Naive thymus-derived CD4-positive, alpha-beta T cell (primary cell): ENCODE measurements at regions of chr19 and their contacts with region 1.

Region 1: GRCh38 chr19:6862673-6863078 is 24.7 kb upstream of the ADGRE1 start:
- DNase-seq: peak; percentile 73 to 91 (median 88)
- ATAC-seq: peak; percentile 94
- H3K4me3 ChIP-seq: peak overlapping the region; percentile 12
- H3K4me3 Mint-ChIP-seq: peak overlapping the region; percentile 81 to 92 (median 86)
- H3K27ac ChIP-seq: peak overlapping the region; percentile 23
- H3K27ac Mint-ChIP-seq: peak overlapping the region; percentile 56 to 92 (median 82)
- H3K4me1 ChIP-seq: peaks cover 0 to 3% of the 10 kb centered on the region in 2 donors
- H3K4me1 Mint-ChIP-seq: peaks cover 17 to 39% (median 28%) of the 10 kb centered on the region in 7 donors
- H3K27me3 ChIP-seq: no peaks in the 10 kb centered on the region
- H3K27me3 Mint-ChIP-seq: no peaks in the 10 kb centered on the region

Region 2: GRCh38 chr19:6218491-6219162 is 644.0 kb before region 1 on chr19:
- CTCF ChIA-PET with region 1: interaction called, 4 read pairs
- POLR2A ChIA-PET with region 1: no interaction called
- intact Hi-C with region 1: loop called in 1 of 2 experiments (anchors 2 kb)
- DNase-seq: peak; percentile 63 to 85 (median 76)
- ATAC-seq: peak; percentile 86
- H3K4me3 ChIP-seq: no peak overlapping the region
- H3K4me3 Mint-ChIP-seq: no peak overlapping the region
- H3K27ac ChIP-seq: no peak overlapping the region
- H3K27ac Mint-ChIP-seq: peak overlapping the region in 3 of 9 donors; percentile 10 to 78 (median 35)
- H3K4me1 ChIP-seq: no peaks in the 10 kb centered on the region
- H3K4me1 Mint-ChIP-seq: peaks cover 0 to 4% (median 0%) of the 10 kb centered on the region in 7 donors
- H3K27me3 ChIP-seq: no peaks in the 10 kb centered on the region
- H3K27me3 Mint-ChIP-seq: no peaks in the 10 kb centered on the region

Region 3: DNA sequence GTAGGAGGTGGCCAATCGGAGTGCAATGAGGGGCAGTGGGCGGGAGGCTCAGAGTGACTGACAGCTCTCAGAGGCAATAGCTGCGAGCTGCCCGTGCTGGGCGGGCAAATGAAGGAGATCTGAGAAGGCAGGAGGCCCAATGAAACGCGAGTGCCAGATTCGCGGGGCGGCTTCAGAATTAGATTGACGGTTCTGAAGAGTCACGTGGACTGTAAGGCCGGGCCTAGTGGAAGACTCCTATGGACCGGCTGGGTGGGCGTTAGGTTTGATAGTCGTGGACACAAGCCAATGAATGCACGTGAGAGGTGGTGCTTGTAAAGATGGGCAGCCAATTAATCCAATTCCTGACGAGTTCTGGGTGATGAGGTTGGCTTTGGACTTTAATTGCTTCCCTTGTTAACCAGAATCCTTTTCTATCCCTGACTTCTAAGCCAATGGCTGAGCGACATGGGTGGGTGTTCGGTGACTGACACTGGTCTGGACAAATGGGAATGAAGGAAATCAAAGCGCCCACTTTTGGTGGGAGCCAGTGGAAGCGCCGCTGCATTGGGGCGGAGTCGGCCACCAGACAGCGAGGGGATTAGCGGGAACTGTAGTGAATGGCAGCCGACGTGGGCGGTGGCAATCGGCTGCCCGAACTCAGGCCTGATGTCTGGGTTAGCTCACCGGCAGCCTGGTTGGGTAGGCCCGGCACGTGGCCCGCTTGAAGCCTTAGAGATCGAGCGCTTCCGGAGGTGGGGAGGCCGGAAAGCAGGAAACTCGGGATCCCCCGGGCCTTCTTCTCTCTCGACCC is 437.5 kb before region 1 on chr19:
- CTCF ChIA-PET with region 1: interaction called, 4 read pairs
- POLR2A ChIA-PET with region 1: no interaction called
- intact Hi-C with region 1: loop called in 1 of 2 experiments (anchors 1 kb)
- DNase-seq: peak; percentile 66 to 100 (median 99)
- ATAC-seq: peak; percentile 89
- H3K4me3 ChIP-seq: peak overlapping the region; percentile 39
- H3K4me3 Mint-ChIP-seq: peak overlapping the region; percentile 69 to 87 (median 78)
- H3K27ac ChIP-seq: peak overlapping the region; percentile 77
- H3K27ac Mint-ChIP-seq: peak overlapping the region; percentile 78 to 97 (median 94)
- H3K4me1 ChIP-seq: peaks cover 15 to 32% of the 10 kb centered on the region in 2 donors
- H3K4me1 Mint-ChIP-seq: peaks cover 18 to 48% (median 41%) of the 10 kb centered on the region in 7 donors
- H3K27me3 ChIP-seq: no peaks in the 10 kb centered on the region
- H3K27me3 Mint-ChIP-seq: no peaks in the 10 kb centered on the region

Region 4: DNA sequence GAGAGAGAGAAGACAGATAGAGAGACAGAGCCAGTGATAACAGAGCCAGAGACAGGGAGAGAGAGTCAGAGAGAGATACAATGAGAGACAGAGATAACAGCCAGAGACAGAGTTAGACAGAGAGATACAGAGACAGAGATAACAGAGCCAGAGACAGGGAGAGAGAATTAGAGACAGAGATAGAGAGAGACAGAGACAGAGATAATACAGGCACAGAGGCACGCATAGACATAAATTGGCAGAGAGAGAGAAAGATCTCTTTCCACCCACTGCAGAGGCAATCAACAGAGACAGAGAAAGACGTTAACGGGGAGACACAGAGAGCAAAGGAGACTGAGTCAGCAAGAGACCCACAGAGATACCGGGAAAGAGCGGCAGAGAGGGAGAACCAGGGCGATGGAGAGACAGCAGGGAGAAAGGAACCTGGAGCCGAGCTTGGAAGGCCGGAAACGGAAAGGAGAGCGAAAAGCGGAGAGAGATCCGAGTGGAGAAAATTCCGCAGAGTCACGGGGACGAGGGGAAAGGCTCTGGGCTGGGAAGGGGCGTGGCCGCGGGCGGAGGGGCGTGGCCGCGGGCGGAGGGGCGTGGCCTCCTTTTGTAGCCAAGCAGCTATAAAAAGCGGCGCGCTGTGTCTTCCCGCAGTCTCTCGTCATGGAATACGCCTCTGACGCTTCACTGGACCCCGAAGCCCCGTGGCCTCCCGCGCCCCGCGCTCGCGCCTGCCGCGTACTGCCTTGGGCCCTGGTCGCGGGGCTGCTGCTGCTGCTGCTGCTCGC is 332.1 kb before region 1 on chr19 and contains the start of gene TNFSF9:
- CTCF ChIA-PET with region 1: no interaction called
- POLR2A ChIA-PET with region 1: no interaction called
- intact Hi-C with region 1: loop called in 1 of 2 experiments (anchors 5 kb)
- DNase-seq: peak; percentile 51 to 93 (median 65)
- ATAC-seq: peak; percentile 90
- H3K4me3 ChIP-seq: peak within 1 kb of the TSS; percentile 36
- H3K4me3 Mint-ChIP-seq: peak within 1 kb of the TSS; percentile 81 to 93 (median 86)
- H3K27ac ChIP-seq: peak within 1 kb of the TSS; percentile 58
- H3K27ac Mint-ChIP-seq: peak within 1 kb of the TSS; percentile 9 to 85 (median 64)
- H3K4me1 ChIP-seq: peaks cover 20 to 27% of the 10 kb centered on the region in 2 donors
- H3K4me1 Mint-ChIP-seq: peaks cover 33 to 43% (median 37%) of the 10 kb centered on the region in 7 donors
- H3K27me3 ChIP-seq: peaks cover 0 to 16% of the 10 kb centered on the region in 2 donors
- H3K27me3 Mint-ChIP-seq: peaks cover 27 to 46% (median 28%) of the 10 kb centered on the region in 5 donors
- total RNA-seq, gene TNFSF9: 0.38 to 3.9 (median 3.0) TPM in 4 of 5 experiments, not detected in the other

Region 5: GRCh38 chr19:6767357-6768235 is 95.1 kb before region 1 on chr19 and contains the start of gene SH2D3A:
- CTCF ChIA-PET with region 1: interaction called, 6 read pairs
- POLR2A ChIA-PET with region 1: interaction called, 10 read pairs
- intact Hi-C with region 1: loop called (anchors 1 kb)
- DNase-seq: peak; percentile 80 to 98 (median 97)
- ATAC-seq: peak; percentile 84
- H3K4me3 ChIP-seq: peak within 1 kb of the TSS; percentile 82
- H3K4me3 Mint-ChIP-seq: peak within 1 kb of the TSS; percentile 88 to 99 (median 94)
- H3K27ac ChIP-seq: peak within 1 kb of the TSS; percentile 91
- H3K27ac Mint-ChIP-seq: peak within 1 kb of the TSS; percentile 89 to 98 (median 95)
- H3K4me1 ChIP-seq: peaks cover 24 to 41% of the 10 kb centered on the region in 2 donors
- H3K4me1 Mint-ChIP-seq: peaks cover 28 to 65% (median 55%) of the 10 kb centered on the region in 7 donors
- H3K27me3 ChIP-seq: no peaks in the 10 kb centered on the region
- H3K27me3 Mint-ChIP-seq: no peaks in the 10 kb centered on the region
- total RNA-seq, gene SH2D3A: 27.9 to 64.7 (median 57.4) TPM

Region 6: DNA sequence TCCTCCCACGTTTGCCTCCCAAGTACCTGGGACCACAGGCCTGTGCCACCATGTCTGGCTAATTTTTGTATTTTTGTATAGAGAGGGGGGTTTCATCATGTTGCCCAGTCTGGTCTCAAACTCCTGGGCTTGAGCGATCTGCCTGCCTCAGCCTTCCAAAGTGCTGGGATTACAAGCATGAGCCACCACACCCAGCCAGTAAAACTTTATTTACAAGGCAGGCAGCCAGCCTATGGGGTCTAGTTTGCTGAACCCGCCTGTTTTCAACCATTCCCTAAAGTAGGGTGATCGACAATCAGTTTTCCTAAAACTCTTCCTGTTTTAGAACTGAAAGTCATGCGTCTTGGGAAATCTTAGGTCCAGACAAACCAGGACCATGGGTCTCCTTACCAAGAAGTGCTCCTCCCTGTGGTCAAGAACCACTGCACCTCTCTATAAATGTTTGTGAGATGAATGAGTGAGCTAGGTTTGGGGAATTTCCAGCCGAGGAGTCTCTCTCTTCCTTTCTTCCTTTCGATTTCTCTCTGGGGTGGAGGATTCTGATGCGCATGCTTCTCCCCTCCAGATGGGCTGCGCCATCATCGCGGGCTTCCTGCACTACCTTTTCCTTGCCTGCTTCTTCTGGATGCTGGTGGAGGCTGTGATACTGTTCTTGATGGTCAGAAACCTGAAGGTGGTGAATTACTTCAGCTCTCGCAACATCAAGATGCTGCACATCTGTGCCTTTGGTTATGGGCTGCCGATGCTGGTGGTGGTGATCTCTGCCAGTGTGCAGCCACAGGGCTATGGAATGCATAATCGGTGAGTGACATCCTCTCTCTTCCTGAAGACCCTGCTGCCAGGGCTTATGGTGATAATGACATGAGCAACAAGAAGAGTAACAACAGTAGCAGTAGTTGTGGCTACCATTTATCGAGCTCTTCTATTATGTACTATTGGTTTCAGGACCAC is 63.4 kb after region 1 on chr19:
- CTCF ChIA-PET with region 1: interaction called, 4 read pairs
- POLR2A ChIA-PET with region 1: interaction called, 3 read pairs
- intact Hi-C with region 1: loop called in 1 of 2 experiments (anchors 10 kb)
- DNase-seq: peak in 7 of 9 donors; percentile 2 to 47 (median 12)
- ATAC-seq: peak; percentile 93
- H3K4me3 ChIP-seq: peak overlapping the region; percentile 34
- H3K4me3 Mint-ChIP-seq: peak overlapping the region; percentile 36 to 89 (median 72)
- H3K27ac ChIP-seq: no peak overlapping the region
- H3K27ac Mint-ChIP-seq: peak overlapping the region in 8 of 9 donors; percentile 5 to 93 (median 90)
- H3K4me1 ChIP-seq: peaks cover 3 to 11% of the 10 kb centered on the region in 2 donors
- H3K4me1 Mint-ChIP-seq: peaks cover 13 to 28% (median 22%) of the 10 kb centered on the region in 7 donors
- H3K27me3 ChIP-seq: no peaks in the 10 kb centered on the region
- H3K27me3 Mint-ChIP-seq: no peaks in the 10 kb centered on the region

Region 7: GRCh38 chr19:7069042-7069903 is 206.6 kb after region 1 on chr19 and contains the start of gene ZNF557:
- CTCF ChIA-PET with region 1: no interaction called
- POLR2A ChIA-PET with region 1: interaction called, 10 read pairs
- intact Hi-C with region 1: no loop called
- DNase-seq: peak; percentile 93 to 100 (median 99)
- ATAC-seq: peak; percentile 99
- H3K4me3 ChIP-seq: peak within 1 kb of the TSS; percentile 100
- H3K4me3 Mint-ChIP-seq: peak within 1 kb of the TSS; percentile 90 to 98 (median 94)
- H3K27ac ChIP-seq: peak within 1 kb of the TSS; percentile 84
- H3K27ac Mint-ChIP-seq: peak within 1 kb of the TSS; percentile 63 to 95 (median 94)
- H3K4me1 ChIP-seq: peaks cover 14% of the 10 kb centered on the region in 2 donors
- H3K4me1 Mint-ChIP-seq: peaks cover 7 to 40% (median 19%) of the 10 kb centered on the region in 7 donors
- H3K27me3 ChIP-seq: no peaks in the 10 kb centered on the region
- H3K27me3 Mint-ChIP-seq: no peaks in the 10 kb centered on the region
- total RNA-seq, gene ZNF557: 11.7 to 36.2 (median 20.0) TPM